Sciatic nerve (tissue), 2 donors: ENCODE measurements at regions of chr1 and their contacts with region 1.

Region 1: GRCh38 chr1:38656726-38657125 is 202.8 kb downstream of the RRAGC start:
- DNase-seq: no peak
- ATAC-seq: no peak

Region 2: GRCh38 chr1:36938819-36939218 is 1717.9 kb before region 1 on chr1:
- intact Hi-C with region 1: loop called (anchors 5 kb)
- DNase-seq: no peak
- ATAC-seq: no peak